Left cardiac atrium (tissue), 4 donors: ENCODE measurements at regions of chr13 and their contacts with region 1.

Region 1: DNA sequence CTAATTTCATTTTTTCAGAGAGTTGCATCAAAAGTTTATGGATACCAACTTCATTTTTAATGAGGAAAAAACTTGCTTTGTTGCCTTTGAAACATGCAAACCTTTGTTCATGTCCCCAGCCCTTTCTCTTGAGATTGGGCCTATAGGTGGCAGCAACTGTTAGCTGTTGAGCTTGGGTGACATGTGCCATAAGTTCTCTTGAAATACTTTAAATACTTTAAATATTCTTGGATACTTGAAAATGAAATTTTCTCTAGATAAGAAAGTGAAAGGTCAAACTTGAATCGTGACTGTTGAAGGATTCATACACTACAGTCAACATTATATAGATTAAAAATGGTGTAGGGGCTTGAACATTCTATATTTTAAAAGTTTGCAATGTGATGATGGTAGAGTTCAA is 294.9 kb downstream of the NDFIP2 start:
- DNase-seq: no peak
- ATAC-seq: peak; percentile 46 to 60

Region 2: GRCh38 chr13:80012251-80012650 is 236.4 kb after region 1 on chr13:
- intact Hi-C with region 1: loop called in 1 of 2 experiments (anchors 10 kb)
- DNase-seq: no peak
- ATAC-seq: peak in 1 of 2 donors; percentile 75

Region 3: DNA sequence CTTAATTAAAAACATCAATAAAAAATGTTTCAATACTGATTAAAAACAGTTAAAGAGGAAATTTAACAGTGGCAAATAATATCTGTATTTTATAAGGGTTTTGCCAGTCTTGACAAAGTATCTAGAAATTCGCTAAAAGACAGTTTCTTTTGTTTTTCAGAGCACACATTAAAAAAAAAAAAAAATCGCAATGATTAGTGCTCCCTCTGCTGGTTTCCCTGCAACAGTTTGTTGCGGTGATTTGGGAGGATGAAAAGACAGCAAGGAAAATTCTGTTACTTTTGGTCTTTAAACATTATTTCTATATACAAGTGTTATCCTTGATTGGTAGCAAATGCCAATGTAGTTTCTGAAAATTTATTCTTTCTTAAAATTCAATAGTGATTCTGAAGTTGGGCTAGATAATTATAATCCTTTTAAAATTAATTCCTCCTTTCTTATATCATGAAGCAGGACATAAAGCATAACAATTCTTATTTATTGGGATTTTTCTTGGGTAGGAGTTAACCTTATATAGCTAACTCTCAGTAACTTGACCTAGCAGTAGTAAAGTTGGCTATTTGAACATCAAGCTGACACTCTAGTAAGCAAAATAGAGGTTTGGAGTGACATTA is 588.2 kb after region 1 on chr13:
- intact Hi-C with region 1: loop called in 1 of 2 experiments (anchors 10 kb)
- DNase-seq: no peak
- ATAC-seq: no peak